ENCODE measurements at regions of chr19 and their contacts with region 1.

Region 1: DNA sequence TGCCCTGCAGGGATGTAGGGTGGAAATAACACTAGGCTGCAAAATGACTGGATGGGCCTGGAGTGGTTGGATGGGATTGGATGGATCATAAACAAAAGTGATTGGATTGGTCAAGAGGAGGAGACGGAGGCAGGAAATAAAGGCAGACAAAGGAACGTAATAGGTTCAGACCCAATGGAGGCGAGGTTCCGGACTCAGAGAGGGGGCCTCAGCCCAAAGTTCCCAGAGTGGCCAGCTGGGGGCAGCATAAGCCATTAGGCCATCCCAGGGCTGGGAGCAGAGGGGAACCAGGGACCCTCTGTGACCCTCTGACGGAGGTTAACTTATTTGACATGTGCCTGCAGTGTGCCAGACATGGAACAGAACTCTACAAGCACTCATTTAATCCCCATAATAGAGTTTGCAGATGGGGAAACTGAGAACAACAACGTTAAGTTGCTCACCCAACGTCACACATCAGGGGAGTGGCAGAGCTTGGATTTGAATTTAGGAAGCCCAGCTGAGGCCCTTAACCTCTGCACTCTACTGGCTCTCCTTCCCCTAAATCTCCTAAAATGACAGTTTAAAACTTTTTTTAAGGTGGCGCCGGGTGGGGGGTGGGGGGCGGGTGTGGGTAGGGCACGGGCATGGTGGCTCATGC is 15.3 kb upstream of the MAP1S start:
- DNase-seq: peak; percentile 79
- ATAC-seq: no peak

Region 2: GRCh38 chr19:17755977-17756670 is 52.2 kb after region 1 on chr19:
- intact Hi-C with region 1: loop called (anchors 5 kb)
- DNase-seq: no peak
- ATAC-seq: no peak

Region 3: GRCh38 chr19:17766543-17767131 is 62.7 kb after region 1 on chr19:
- intact Hi-C with region 1: loop called (anchors 5 kb)
- DNase-seq: peak; percentile 88
- ATAC-seq: peak; percentile 91

Measured in Right ventricle myocardium superior (tissue), 1 donor.